Activated CD8-positive, alpha-beta T cell treated with anti-CD3 and anti-CD28 coated beads for 36 hours (primary cell): ENCODE measurements at regions of chr4 and their contacts with region 1.

Region 1: GRCh38 chr4:82428969-82429727 is 1.1 kb downstream of the HNRNPDL start:
- DNase-seq: peak; percentile 90
- ATAC-seq: peak; percentile 61
- H3K4me3 Mint-ChIP-seq: peak overlapping the region; percentile 97
- H3K27ac Mint-ChIP-seq: peak overlapping the region; percentile 99
- H3K4me1 Mint-ChIP-seq: peaks cover 53% of the 10 kb centered on the region
- H3K27me3 Mint-ChIP-seq: no peaks in the 10 kb centered on the region
- CTCF ChIP-seq: peak; percentile 89

Region 2: GRCh38 chr4:82352913-82353366 is 76.2 kb before region 1 on chr4:
- CTCF ChIA-PET with region 1: interaction called, 8 read pairs
- POLR2A ChIA-PET with region 1: interaction called, 14 read pairs
- intact Hi-C with region 1: no loop called
- DNase-seq: no peak
- ATAC-seq: peak; percentile 61
- H3K4me3 Mint-ChIP-seq: no peak overlapping the region
- H3K27ac Mint-ChIP-seq: peak overlapping the region; percentile 85
- H3K4me1 Mint-ChIP-seq: peaks cover 60% of the 10 kb centered on the region
- H3K27me3 Mint-ChIP-seq: no peaks in the 10 kb centered on the region
- CTCF ChIP-seq: no peak

Region 3: GRCh38 chr4:82415922-82416365 is 13.2 kb before region 1 on chr4:
- CTCF ChIA-PET with region 1: interaction called, 12 read pairs
- POLR2A ChIA-PET with region 1: interaction called, 12 read pairs
- intact Hi-C with region 1: no loop called
- DNase-seq: no peak
- ATAC-seq: no peak
- H3K4me3 Mint-ChIP-seq: peak overlapping the region; percentile 7
- H3K27ac Mint-ChIP-seq: no peak overlapping the region
- H3K4me1 Mint-ChIP-seq: peaks cover 4% of the 10 kb centered on the region
- H3K27me3 Mint-ChIP-seq: peaks cover 12% of the 10 kb centered on the region
- CTCF ChIP-seq: no peak

Region 4: DNA sequence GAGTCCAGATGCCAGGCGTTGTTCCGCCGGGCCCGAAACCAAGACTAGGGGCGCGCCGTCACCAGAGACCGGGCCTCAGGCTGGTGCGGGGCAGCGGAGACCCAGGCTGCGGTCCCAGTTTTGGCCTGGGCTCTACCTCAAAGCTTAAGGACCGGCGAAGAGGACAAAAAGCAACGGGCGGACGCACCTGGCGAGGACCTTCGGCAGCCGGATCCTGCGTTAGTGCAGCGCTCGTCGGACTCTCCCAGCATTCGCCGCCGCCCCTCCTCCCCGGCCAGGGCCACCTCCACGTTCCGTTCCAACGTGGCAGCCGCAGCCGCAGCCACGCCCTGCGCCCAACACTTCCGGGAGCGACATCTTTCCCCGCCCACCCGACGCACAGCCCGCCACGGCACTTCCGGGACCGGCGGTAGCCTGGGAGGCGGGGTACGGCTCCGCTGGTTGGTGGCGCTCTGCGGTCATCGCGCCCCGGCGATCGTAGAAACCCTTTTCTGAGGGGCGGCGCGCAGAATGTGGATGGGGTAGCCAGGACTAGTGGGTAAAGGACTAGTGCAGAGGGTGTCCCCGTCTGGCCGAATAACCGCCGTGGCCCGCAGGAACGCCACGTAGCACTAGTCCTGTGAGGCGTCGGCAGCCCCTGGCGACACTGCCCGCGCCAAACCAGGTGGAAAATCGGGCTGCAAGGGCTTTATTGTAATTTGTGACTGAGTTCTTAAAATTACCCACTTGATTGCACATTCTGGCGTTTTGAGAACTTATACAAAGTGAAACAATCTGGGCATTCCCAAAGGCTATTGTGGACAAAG is 462.0 kb after region 1 on chr4 and contains the start of gene SEC31A:
- CTCF ChIA-PET with region 1: no interaction called
- POLR2A ChIA-PET with region 1: no interaction called
- intact Hi-C with region 1: loop called (anchors 10 kb)
- DNase-seq: peak; percentile 98
- ATAC-seq: peak; percentile 96
- H3K4me3 Mint-ChIP-seq: peak within 1 kb of the TSS; percentile 96
- H3K27ac Mint-ChIP-seq: peak within 1 kb of the TSS; percentile 96
- H3K4me1 Mint-ChIP-seq: peaks cover 42% of the 10 kb centered on the region
- H3K27me3 Mint-ChIP-seq: no peaks in the 10 kb centered on the region
- CTCF ChIP-seq: peak; percentile 20
- total RNA-seq, gene SEC31A: 76.0 to 77.1 TPM